Esophagus muscularis mucosa (tissue), 4 donors: ENCODE measurements at regions of chr20 and their contacts with region 1.

Region 1: GRCh38 chr20:478949-479429 is 16.7 kb upstream of the TBC1D20 start:
- DNase-seq: no peak
- H3K4me3 ChIP-seq: no peak overlapping the region
- H3K27ac ChIP-seq: no peak overlapping the region
- H3K4me1 ChIP-seq: peaks cover 0 to 10% (median 5%) of the 10 kb centered on the region in 4 donors
- H3K27me3 ChIP-seq: no peaks in the 10 kb centered on the region
- CTCF ChIP-seq: peak; percentile 60 to 64 (median 60)
- EP300 ChIP-seq: no peak
- POLR2A ChIP-seq: no peak

Region 2: DNA sequence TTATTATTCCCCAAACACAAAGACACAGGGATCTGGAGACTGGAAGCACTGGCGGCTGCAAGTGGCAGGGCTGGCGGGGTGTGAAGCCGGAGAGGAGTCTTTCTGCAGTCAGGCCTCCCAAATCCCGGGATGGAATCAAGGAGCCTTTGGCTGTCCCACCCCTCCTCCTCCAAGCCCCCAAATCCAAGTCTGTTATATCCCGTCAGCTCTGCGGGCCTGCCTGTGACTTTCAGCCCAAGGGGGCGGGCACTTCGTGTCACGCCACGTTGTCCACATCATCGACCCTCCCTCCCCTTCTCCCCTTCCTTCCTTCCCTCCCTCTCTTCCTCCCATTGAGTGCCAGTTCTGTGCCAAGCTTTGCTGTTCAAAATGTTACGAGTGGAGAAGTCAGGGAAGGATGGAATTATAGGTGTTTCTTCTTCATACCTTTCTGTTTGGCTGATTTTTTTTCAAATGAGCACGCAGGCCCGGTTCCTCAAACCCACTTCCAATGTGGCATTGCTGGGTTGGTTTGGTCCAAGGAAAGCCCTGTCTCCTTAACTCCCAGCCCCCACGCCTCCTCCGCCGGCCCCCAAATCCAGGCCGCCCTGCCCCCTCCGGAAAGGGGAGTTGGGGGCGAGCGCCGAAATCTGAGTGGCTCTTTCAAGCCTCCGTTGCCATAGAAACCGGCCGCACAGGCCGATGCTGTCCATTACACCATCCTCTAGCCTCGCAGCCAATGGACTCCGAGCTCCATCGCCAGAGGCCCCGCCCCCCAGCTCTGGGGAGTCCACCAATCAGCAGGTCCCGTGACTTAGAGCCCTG is 168.9 kb before region 1 on chr20:
- intact Hi-C with region 1: no loop called
- DNase-seq: peak; percentile 100
- H3K4me3 ChIP-seq: peak overlapping the region; percentile 49 to 68 (median 60)
- H3K27ac ChIP-seq: peak overlapping the region; percentile 69 to 87 (median 83)
- H3K4me1 ChIP-seq: peaks cover 14 to 25% (median 18%) of the 10 kb centered on the region in 4 donors
- H3K27me3 ChIP-seq: no peaks in the 10 kb centered on the region
- CTCF ChIP-seq: no peak
- EP300 ChIP-seq: no peak
- POLR2A ChIP-seq: no peak

Region 3: GRCh38 chr20:407133-407952 is 71.6 kb before region 1 on chr20:
- intact Hi-C with region 1: loop called (anchors 5 kb)
- DNase-seq: no peak
- H3K4me3 ChIP-seq: peak overlapping the region; percentile 78 to 99 (median 92)
- H3K27ac ChIP-seq: peak overlapping the region; percentile 82 to 97 (median 95)
- H3K4me1 ChIP-seq: peaks cover 16 to 31% (median 29%) of the 10 kb centered on the region in 4 donors
- H3K27me3 ChIP-seq: no peaks in the 10 kb centered on the region
- CTCF ChIP-seq: peak in 2 of 3 experiments; percentile 5 to 6
- EP300 ChIP-seq: no peak
- POLR2A ChIP-seq: no peak